ENCODE measurements at regions of chr7 and their contacts with region 1.

Region 1: DNA sequence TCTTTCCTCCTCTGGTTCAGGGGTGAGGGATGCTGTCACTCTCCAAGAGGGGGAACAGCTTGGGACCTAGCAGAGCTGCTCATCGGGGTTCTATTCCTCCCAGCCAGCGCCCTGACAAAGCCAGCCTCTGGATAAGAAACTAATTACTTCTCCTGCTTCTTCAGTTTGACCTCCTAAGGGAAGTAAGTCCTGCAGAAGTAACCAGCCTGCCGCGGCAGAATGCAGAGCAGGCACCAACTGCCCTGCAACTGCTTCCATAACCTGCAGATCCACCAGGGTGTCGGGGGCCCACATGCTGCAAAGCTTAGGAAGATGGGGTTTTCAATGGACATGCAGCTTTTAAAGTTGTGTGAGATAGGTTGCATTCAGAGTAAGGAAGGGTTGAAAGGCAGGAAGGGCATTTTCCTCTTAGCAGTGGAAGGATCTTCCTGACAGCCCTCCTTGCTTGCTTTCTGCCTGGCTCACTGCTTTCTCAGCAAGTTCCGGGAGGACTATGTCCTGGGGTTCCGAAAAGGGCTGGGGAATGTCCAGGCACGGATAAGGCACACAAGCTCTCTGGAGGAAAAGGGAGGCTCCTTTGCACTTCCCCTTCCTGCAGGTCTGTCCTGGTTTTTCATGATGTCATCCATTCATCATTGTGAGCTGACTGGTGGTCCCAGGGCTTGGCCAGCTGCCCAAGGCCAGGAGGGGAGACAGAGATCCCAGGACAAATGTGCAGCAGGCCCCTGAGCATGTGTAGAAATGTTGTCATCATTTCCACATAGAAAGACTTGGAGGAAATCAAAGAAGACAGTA is 24.3 kb upstream of the CALU start:
- DNase-seq: no peak
- H3K4me3 ChIP-seq: no peak overlapping the region
- H3K27ac ChIP-seq: no peak overlapping the region
- H3K4me1 ChIP-seq: no peaks in the 10 kb centered on the region
- H3K27me3 ChIP-seq: no peaks in the 10 kb centered on the region
- CTCF ChIP-seq: no peak
- POLR2A ChIP-seq: no peak

Region 2: GRCh38 chr7:129569811-129570215 is 854.9 kb after region 1 on chr7:
- intact Hi-C with region 1: loop called (anchors 5 kb)
- DNase-seq: no peak
- H3K4me3 ChIP-seq: no peak overlapping the region
- H3K27ac ChIP-seq: no peak overlapping the region
- H3K4me1 ChIP-seq: no peaks in the 10 kb centered on the region
- H3K27me3 ChIP-seq: no peaks in the 10 kb centered on the region
- CTCF ChIP-seq: no peak
- POLR2A ChIP-seq: no peak